MCF 10A (cell line): ENCODE measurements at regions of chr21 and their contacts with region 1.

Region 1: GRCh38 chr21:21921421-21922232 is 923.4 kb downstream of the NCAM2 start:
- DNase-seq: peak; percentile 60
- H3K4me3 Mint-ChIP-seq: no peak overlapping the region
- H3K27ac Mint-ChIP-seq: no peak overlapping the region
- H3K4me1 Mint-ChIP-seq: peaks cover 12% of the 10 kb centered on the region
- H3K27me3 Mint-ChIP-seq: no peaks in the 10 kb centered on the region
- CTCF ChIP-seq: peak; percentile 48

Region 2: GRCh38 chr21:20999659-21000058 is 922.0 kb before region 1 on chr21:
- CTCF ChIA-PET with region 1: interaction called, 6 read pairs
- POLR2A ChIA-PET with region 1: no interaction called
- intact Hi-C with region 1: loop called (anchors 5 kb)
- DNase-seq: peak; percentile 48
- H3K4me3 Mint-ChIP-seq: no peak overlapping the region
- H3K27ac Mint-ChIP-seq: no peak overlapping the region
- H3K4me1 Mint-ChIP-seq: peaks cover 5% of the 10 kb centered on the region
- H3K27me3 Mint-ChIP-seq: no peaks in the 10 kb centered on the region
- CTCF ChIP-seq: peak; percentile 69

Region 3: GRCh38 chr21:21213297-21213696 is 708.3 kb before region 1 on chr21:
- CTCF ChIA-PET with region 1: interaction called, 11 read pairs
- POLR2A ChIA-PET with region 1: no interaction called
- intact Hi-C with region 1: no loop called
- DNase-seq: no peak
- H3K4me3 Mint-ChIP-seq: no peak overlapping the region
- H3K27ac Mint-ChIP-seq: no peak overlapping the region
- H3K4me1 Mint-ChIP-seq: no peaks in the 10 kb centered on the region
- H3K27me3 Mint-ChIP-seq: no peaks in the 10 kb centered on the region
- CTCF ChIP-seq: no peak

Region 4: GRCh38 chr21:21232320-21232719 is 689.3 kb before region 1 on chr21:
- CTCF ChIA-PET with region 1: interaction called, 20 read pairs
- POLR2A ChIA-PET with region 1: interaction called, 4 read pairs
- intact Hi-C with region 1: loop called (anchors 1 kb)
- DNase-seq: peak; percentile 53
- H3K4me3 Mint-ChIP-seq: no peak overlapping the region
- H3K27ac Mint-ChIP-seq: no peak overlapping the region
- H3K4me1 Mint-ChIP-seq: no peaks in the 10 kb centered on the region
- H3K27me3 Mint-ChIP-seq: no peaks in the 10 kb centered on the region
- CTCF ChIP-seq: peak; percentile 57

Region 5: DNA sequence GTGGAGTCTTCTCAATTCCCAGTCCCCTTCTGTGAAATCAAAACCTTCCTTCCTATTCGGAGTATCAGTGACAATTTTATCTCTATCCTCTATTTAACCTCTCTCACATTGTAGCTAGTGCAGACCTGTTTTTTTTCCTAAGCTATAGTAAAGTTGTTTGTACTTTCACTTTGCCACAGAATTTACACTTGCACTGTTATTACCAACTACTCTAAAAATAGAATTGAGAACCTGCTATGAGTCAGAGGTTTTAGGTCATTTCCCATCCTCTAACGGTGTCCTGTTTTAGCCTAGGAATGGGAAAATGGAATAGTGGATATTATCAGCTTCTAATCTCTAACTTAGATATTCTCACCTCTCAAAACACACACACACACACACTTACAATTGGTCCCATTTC is 60.7 kb before region 1 on chr21:
- CTCF ChIA-PET with region 1: no interaction called
- POLR2A ChIA-PET with region 1: no interaction called
- intact Hi-C with region 1: no loop called
- DNase-seq: peak; percentile 47
- H3K4me3 Mint-ChIP-seq: peak overlapping the region; percentile 3
- H3K27ac Mint-ChIP-seq: peak overlapping the region; percentile 60
- H3K4me1 Mint-ChIP-seq: peaks cover 12% of the 10 kb centered on the region
- H3K27me3 Mint-ChIP-seq: no peaks in the 10 kb centered on the region
- CTCF ChIP-seq: no peak

Region 6: DNA sequence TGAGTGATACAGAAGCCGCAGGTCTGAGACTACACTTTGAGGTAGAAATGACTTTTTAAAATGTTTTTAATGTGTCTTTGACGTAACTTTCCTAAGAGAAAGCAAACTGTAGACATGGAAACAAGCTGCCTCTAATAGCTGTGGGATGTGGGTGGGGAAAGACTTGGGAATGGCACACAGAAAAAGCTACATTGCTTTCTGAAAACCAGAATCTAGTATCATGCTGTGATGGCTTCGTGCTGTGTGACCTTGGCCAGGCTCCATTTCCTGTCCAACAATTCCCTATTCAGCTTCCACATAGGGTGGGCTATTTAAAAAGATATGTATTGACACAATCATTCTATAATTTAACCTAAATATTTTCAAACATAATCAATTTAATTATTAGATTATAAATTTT is 14.4 kb before region 1 on chr21:
- CTCF ChIA-PET with region 1: interaction called, 15 read pairs
- POLR2A ChIA-PET with region 1: no interaction called
- intact Hi-C with region 1: no loop called
- DNase-seq: no peak
- H3K4me3 Mint-ChIP-seq: no peak overlapping the region
- H3K27ac Mint-ChIP-seq: no peak overlapping the region
- H3K4me1 Mint-ChIP-seq: no peaks in the 10 kb centered on the region
- H3K27me3 Mint-ChIP-seq: no peaks in the 10 kb centered on the region
- CTCF ChIP-seq: no peak

Region 7: GRCh38 chr21:22145545-22145944 is 223.9 kb after region 1 on chr21:
- CTCF ChIA-PET with region 1: no interaction called
- POLR2A ChIA-PET with region 1: no interaction called
- intact Hi-C with region 1: no loop called
- DNase-seq: no peak
- H3K4me3 Mint-ChIP-seq: no peak overlapping the region
- H3K27ac Mint-ChIP-seq: no peak overlapping the region
- H3K4me1 Mint-ChIP-seq: no peaks in the 10 kb centered on the region
- H3K27me3 Mint-ChIP-seq: no peaks in the 10 kb centered on the region
- CTCF ChIP-seq: no peak